IMR-90 (cell line): ENCODE measurements at regions of chr13 and their contacts with region 1.

Region 1: DNA sequence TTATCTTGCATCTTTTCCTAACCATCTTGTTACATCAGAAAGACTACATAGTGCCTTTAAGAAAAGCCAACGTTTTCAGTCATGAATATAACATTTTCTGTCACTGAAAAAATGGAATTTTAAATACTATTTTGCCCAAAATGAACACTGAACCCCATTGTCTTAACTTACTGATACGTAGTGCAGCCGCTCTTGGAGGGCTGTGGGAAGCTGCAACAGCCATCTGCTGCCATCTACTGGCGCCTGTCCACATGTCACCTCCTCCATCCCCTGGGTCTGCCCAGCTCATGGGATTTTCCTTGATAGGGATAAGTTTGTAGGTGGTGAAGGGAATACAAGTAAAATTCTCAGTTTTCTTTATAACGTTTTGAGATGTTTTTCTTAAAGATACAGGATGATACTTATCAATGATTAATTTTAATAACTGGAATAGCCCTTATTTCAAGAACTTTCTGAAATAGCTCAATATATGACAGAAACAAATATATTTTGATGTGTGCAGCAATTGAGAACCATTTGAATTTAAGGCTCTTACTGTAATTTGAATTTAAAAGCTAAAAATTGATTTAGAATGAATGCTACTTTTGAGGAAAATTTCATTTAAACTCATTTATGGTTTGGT is 73.7 kb downstream of the GGACT start:
- DNase-seq: peak; percentile 75
- ATAC-seq: peak; percentile 95
- H3K4me3 ChIP-seq: no peak overlapping the region
- H3K27ac ChIP-seq: no peak overlapping the region
- H3K4me1 ChIP-seq: no peaks in the 10 kb centered on the region; the same call in 1 of the 2 replicates
- H3K27me3 ChIP-seq: no peaks in the 10 kb centered on the region
- CTCF ChIP-seq: peak; percentile 93
- POLR2A ChIP-seq: peak; percentile 41; the same call in 1 of the 2 replicates
- RAD21 ChIP-seq: peak; percentile 98

Region 2: DNA sequence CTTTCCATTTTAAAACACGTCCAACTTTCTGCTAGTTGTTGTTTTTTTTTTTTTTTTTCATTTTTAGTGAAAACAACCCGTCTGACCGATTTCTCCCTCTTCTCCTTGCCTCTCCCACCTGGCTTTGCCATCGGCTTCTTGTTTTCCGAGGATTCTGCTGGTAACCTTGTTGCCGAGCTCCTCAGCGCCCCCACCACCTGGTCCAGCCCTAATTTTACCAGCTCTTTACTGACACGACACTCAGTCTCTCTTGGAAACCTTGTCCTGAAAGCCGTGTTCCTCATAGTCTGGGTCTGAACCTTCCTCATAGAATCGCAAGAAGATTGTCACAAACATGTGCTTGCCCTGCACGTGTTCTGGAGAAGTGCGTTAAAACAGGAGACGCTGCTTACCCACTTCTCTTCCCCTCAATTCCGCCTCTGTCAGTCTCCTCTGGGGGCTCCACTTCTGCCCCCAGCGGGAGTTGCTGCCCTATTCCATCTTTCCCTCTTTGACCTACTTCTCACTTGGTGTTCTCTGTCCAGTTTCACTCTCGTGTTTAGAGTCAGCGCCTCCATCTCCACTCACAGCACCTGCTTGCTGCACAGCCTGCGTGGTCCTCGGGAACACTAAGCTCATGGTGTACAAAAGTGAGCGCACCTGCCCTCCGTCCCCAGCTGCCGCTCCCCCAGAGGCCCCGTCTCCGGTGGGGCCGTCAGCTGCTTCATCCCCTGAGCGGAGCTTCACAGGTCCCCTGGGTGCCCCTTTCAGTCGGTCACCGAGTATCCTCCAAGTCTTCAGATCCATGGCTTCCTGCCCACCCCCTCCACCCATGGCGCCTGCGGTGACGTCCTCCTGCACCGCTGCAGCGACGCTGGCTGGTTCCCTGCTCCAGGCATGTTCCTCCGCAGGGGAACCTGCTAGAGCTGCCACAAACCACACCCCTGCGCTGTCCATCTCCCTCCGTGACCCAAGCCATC is 948.5 kb before region 1 on chr13:
- CTCF ChIA-PET with region 1: no interaction called
- POLR2A ChIA-PET with region 1: no interaction called
- dilution Hi-C with region 1: no loop called
- in situ Hi-C with region 1: no loop called
- intact Hi-C with region 1: no loop called
- DNase-seq: no peak
- ATAC-seq: no peak
- H3K4me3 ChIP-seq: no peak overlapping the region
- H3K27ac ChIP-seq: no peak overlapping the region
- H3K4me1 ChIP-seq: no peaks in the 10 kb centered on the region
- H3K27me3 ChIP-seq: no peaks in the 10 kb centered on the region
- CTCF ChIP-seq: no peak
- POLR2A ChIP-seq: no peak
- RAD21 ChIP-seq: no peak

Region 3: GRCh38 chr13:99656092-99656745 is 858.7 kb before region 1 on chr13:
- CTCF ChIA-PET with region 1: interaction called, 4 read pairs
- POLR2A ChIA-PET with region 1: no interaction called
- dilution Hi-C with region 1: no loop called
- in situ Hi-C with region 1: loop called (anchors 10 kb)
- intact Hi-C with region 1: loop called (anchors 1 kb)
- DNase-seq: peak; percentile 67
- ATAC-seq: peak; percentile 85
- H3K4me3 ChIP-seq: no peak overlapping the region
- H3K27ac ChIP-seq: no peak overlapping the region
- H3K4me1 ChIP-seq: no peaks in the 10 kb centered on the region
- H3K27me3 ChIP-seq: peaks cover 23% of the 10 kb centered on the region
- CTCF ChIP-seq: peak; percentile 87
- POLR2A ChIP-seq: no peak
- RAD21 ChIP-seq: peak; percentile 83

Region 4: DNA sequence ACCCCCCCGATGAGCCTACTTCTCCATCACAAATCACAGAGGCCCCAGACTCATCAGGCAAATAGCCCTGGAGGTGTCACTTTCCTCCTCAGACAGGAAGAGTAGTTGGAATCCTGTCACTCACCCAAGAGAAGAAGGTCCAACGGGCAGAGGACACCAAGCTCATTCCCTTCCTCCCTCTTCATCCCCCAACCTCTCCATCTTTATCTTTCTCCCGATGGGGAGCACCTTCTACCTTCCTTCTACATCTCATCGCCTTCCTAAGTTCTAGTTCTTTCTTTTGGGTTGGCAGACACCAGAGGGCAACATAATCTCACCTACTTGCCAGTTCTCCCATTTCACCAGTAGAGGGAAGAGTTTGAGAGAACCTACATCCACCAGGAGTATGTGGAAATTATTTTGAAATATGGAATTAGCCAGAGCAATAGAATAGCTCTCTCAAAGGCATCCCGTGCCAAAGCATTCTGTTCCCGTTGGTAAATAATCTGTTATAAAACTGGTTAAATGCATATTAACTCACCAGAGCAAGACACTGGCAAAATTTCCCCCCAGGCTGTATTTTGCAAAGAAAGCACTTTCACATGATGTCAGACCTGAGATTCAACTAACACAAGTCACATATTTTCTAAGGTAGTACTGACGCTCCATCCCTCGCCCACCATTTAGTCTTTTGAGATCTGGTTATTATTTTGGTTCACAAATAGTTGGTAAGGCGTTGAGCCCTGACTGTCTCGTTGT is 598.4 kb before region 1 on chr13:
- CTCF ChIA-PET with region 1: interaction called, 3 read pairs
- POLR2A ChIA-PET with region 1: no interaction called
- dilution Hi-C with region 1: no loop called
- in situ Hi-C with region 1: no loop called
- intact Hi-C with region 1: loop called (anchors 1 kb)
- DNase-seq: peak; percentile 71
- ATAC-seq: peak; percentile 89
- H3K4me3 ChIP-seq: no peak overlapping the region
- H3K27ac ChIP-seq: no peak overlapping the region
- H3K4me1 ChIP-seq: no peaks in the 10 kb centered on the region
- H3K27me3 ChIP-seq: peaks cover 24% of the 10 kb centered on the region
- CTCF ChIP-seq: peak; percentile 100
- POLR2A ChIP-seq: no peak
- RAD21 ChIP-seq: peak; percentile 79

Region 5: GRCh38 chr13:100039740-100040139 is 475.2 kb before region 1 on chr13:
- CTCF ChIA-PET with region 1: no interaction called
- POLR2A ChIA-PET with region 1: no interaction called
- dilution Hi-C with region 1: no loop called
- in situ Hi-C with region 1: no loop called
- intact Hi-C with region 1: loop called (anchors 1 kb)
- DNase-seq: peak; percentile 3
- ATAC-seq: no peak
- H3K4me3 ChIP-seq: no peak overlapping the region
- H3K27ac ChIP-seq: no peak overlapping the region
- H3K4me1 ChIP-seq: no peaks in the 10 kb centered on the region
- H3K27me3 ChIP-seq: no peaks in the 10 kb centered on the region
- CTCF ChIP-seq: no peak
- POLR2A ChIP-seq: no peak
- RAD21 ChIP-seq: no peak

Region 6: GRCh38 chr13:100156788-100157187 is 358.1 kb before region 1 on chr13:
- CTCF ChIA-PET with region 1: interaction called, 3 read pairs
- POLR2A ChIA-PET with region 1: no interaction called
- dilution Hi-C with region 1: no loop called
- in situ Hi-C with region 1: no loop called
- intact Hi-C with region 1: loop called (anchors 10 kb)
- DNase-seq: no peak
- ATAC-seq: no peak
- H3K4me3 ChIP-seq: no peak overlapping the region
- H3K27ac ChIP-seq: no peak overlapping the region
- H3K4me1 ChIP-seq: peaks cover 2% of the 10 kb centered on the region; the same call in 1 of the 2 replicates
- H3K27me3 ChIP-seq: no peaks in the 10 kb centered on the region
- CTCF ChIP-seq: no peak
- POLR2A ChIP-seq: no peak
- RAD21 ChIP-seq: no peak

Region 7: GRCh38 chr13:100347941-100348340 is 167.0 kb before region 1 on chr13:
- CTCF ChIA-PET with region 1: interaction called, 3 read pairs
- POLR2A ChIA-PET with region 1: no interaction called
- dilution Hi-C with region 1: no loop called
- in situ Hi-C with region 1: no loop called
- intact Hi-C with region 1: loop called (anchors 10 kb)
- DNase-seq: no peak
- ATAC-seq: no peak
- H3K4me3 ChIP-seq: no peak overlapping the region
- H3K27ac ChIP-seq: no peak overlapping the region
- H3K4me1 ChIP-seq: no peaks in the 10 kb centered on the region
- H3K27me3 ChIP-seq: no peaks in the 10 kb centered on the region
- CTCF ChIP-seq: no peak
- POLR2A ChIP-seq: no peak
- RAD21 ChIP-seq: no peak